Gastrocnemius medialis (tissue), 4 donors: ENCODE measurements at regions of chr9 and their contacts with region 1.

Region 1: GRCh38 chr9:5608298-5609225 is 20.3 kb upstream of the RIC1 start:
- DNase-seq: peak; percentile 37 to 41
- ATAC-seq: peak; percentile 87 to 91
- H3K4me3 ChIP-seq: peak overlapping the region; percentile 46 to 56 (median 51)
- H3K27ac ChIP-seq: peak overlapping the region; percentile 77 to 86 (median 84)
- H3K4me1 ChIP-seq: peaks cover 28 to 36% of the 10 kb centered on the region in 2 donors
- H3K27me3 ChIP-seq: no peaks in the 10 kb centered on the region
- CTCF ChIP-seq: no peak
- POLR2A ChIP-seq: no peak

Region 2: GRCh38 chr9:5832543-5833529 is 224.3 kb after region 1 on chr9 and contains the start of gene ERMP1:
- in situ Hi-C with region 1: no loop called
- intact Hi-C with region 1: loop called (anchors 5 kb)
- DNase-seq: peak; percentile 65 to 84
- ATAC-seq: peak; percentile 74 to 91
- H3K4me3 ChIP-seq: peak within 1 kb of the TSS; percentile 63 to 98 (median 69)
- H3K27ac ChIP-seq: peak within 1 kb of the TSS; percentile 66 to 93 (median 87)
- H3K4me1 ChIP-seq: peaks cover 16 to 24% of the 10 kb centered on the region in 2 donors
- H3K27me3 ChIP-seq: no peaks in the 10 kb centered on the region
- CTCF ChIP-seq: peak; percentile 76 to 87 (median 81)
- POLR2A ChIP-seq: peak; percentile 54 to 71
- total RNA-seq, gene ERMP1: 4.4 to 7.4 (median 6.3) TPM

Region 3: DNA sequence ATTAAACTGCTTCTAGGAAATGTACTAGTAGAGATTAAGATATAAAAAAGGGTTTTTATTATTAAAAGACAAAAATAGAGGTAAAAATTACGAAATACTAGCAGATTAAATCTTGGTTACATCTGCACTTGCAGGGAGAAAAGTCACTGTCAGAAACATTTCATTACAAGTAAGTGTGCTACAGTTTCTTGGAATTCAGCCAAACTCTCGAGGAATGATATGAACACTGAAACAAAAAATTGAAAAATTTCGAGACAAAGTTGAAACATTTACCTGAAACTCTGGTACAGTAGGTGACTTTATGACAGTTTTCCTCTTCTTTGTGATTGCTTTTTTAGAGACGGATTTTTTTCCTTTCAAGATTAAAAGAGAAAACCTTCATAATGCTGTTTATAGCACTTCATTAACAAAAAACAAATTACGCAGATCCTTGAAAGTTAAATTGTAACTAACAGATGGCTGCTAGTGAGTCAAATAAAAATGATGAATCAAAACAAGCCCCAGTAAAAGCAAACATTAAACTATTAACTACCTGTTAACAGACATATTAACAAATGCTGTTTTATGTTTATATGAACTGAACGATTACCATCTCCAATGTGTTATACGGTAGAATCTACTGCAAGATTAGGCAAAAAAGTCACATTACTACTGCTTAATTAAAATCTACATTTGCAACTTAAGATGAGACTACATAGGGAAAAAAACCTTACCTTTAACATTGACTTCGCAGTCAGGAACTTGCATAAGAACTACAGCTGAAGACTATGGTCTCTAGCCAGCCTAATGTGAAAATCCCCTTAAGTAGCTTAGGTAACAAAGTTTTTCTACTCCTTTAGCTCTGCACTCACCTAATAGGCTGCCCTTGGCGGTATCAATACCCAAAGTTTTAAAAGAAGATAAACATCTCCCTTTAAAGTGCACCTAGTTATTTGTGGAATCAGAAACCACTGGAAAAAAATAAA is 345.5 kb after region 1 on chr9:
- in situ Hi-C with region 1: no loop called
- intact Hi-C with region 1: no loop called
- DNase-seq: no peak
- ATAC-seq: no peak
- H3K4me3 ChIP-seq: no peak overlapping the region
- H3K27ac ChIP-seq: no peak overlapping the region
- H3K4me1 ChIP-seq: peaks cover 11 to 13% of the 10 kb centered on the region in 2 donors
- H3K27me3 ChIP-seq: no peaks in the 10 kb centered on the region
- CTCF ChIP-seq: no peak
- POLR2A ChIP-seq: no peak